Heart right ventricle (tissue), 16 donors: ENCODE measurements at regions of chr7 and their contacts with region 1.

Region 1: DNA sequence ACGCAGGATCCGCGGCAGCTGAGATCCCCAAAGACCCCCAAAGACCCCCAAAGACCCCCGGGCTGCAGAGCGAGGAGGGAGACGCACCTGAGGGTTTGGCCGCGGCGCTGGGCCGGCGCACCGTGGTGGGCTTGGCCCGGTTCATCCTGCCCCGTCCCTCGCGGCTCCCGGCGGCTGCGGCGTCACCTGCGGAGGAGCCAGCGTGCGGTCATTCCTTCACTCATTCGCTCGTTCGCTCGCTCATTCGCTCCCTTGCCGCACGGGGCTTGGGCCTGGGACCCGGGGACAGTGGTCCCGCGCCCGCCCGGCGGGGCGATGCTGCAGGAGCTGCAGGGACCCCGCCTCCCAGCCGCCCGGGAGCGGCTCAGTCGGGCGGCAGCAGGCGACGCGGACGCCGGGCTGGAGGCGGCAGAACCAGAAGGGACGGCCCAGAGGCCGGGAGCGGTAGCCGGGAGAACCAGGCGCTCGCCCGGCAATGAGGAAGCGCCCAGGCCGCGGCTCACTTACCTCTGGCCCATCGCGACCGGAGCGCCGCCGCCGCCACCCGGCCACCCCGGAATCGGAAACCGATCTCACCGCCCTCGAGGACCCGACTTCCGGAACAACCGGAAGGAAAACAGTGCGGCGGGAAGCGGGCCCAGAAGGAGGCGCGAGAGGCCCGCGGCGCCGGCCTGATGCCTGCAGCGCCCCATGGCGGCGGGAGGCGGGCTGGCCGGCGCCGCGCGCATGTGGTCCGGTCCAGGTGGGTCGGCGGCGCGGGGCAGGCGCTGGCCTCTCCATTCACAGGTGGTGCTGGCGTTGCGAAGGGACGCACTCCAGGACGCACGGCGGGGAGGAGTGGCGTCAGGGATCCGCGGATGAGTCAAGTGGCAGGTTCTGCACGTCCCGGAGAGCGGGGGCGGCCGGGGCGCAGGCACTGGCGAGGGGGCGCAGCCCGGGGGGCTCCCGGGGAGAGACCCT is at the start of gene INTS1:
- DNase-seq: peak; percentile 92 to 94
- ATAC-seq: peak; percentile 82 to 94 (median 90)
- H3K4me3 ChIP-seq: peak within 1 kb of the TSS; percentile 82 to 100 (median 94)
- H3K27ac ChIP-seq: peak within 1 kb of the TSS in 9 of 10 donors; percentile 59 to 89 (median 76)
- H3K4me1 ChIP-seq: peaks cover 12 to 36% (median 29%) of the 10 kb centered on the region in 9 donors
- H3K27me3 ChIP-seq: no peaks in the 10 kb centered on the region
- CTCF ChIP-seq: peak; percentile 75 to 98 (median 94)
- total RNA-seq, gene INTS1: 41.5 to 59.4 (median 45.4) TPM

Region 2: GRCh38 chr7:1537535-1538412 is 33.7 kb after region 1 on chr7:
- intact Hi-C with region 1: loop called in 2 of 10 experiments (anchors 2 to 5 kb)
- DNase-seq: peak; percentile 94 to 97
- ATAC-seq: peak; percentile 29 to 65 (median 50)
- H3K4me3 ChIP-seq: peak overlapping the region; percentile 26 to 69 (median 55)
- H3K27ac ChIP-seq: peak overlapping the region; percentile 92 to 100 (median 99)
- H3K4me1 ChIP-seq: peaks cover 26 to 80% (median 57%) of the 10 kb centered on the region in 9 donors
- H3K27me3 ChIP-seq: no peaks in the 10 kb centered on the region
- CTCF ChIP-seq: no peak

Region 3: DNA sequence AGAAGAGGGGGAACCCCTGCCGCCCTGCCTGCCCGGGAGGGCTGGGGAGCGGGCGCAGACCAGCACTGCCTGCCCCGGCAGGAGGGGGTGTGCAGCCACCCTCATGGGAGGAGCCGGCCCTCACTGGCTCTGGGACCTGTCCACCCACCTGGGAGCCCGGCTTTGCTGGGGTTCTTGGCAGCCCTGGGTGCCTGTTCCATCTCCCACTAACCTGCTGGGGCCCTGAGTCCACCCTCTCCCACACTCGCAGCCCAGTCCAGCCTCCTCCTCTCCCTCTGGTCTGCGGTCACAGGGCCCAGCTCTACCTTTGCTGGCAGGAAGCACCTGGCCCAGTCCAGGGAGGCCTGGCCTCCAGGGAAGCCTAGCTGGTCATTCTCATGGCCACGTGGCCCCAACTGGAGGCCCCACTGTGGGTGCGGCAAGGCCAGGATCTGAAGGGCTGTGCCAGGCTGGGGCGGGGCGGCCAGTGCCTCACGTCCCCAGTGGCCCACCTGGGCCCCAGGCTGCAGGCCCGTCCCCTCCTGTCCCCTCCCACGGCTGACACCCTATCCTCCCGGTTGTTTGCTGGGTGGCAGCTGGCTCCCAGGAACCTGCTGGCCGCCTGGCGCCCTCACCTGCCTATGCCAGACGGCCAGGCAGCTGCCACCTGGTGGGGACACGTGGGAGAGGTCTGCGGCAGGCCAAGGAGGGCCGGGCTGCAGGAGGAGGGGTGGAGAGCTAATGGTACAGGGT is 51.9 kb after region 1 on chr7 and contains the start of gene TMEM184A:
- intact Hi-C with region 1: loop called in 9 of 10 experiments (anchors 5 to 10 kb)
- DNase-seq: peak in 1 of 2 donors; percentile 47
- ATAC-seq: peak in 7 of 8 donors; percentile 14 to 61 (median 36)
- H3K4me3 ChIP-seq: no peak within 1 kb of the TSS
- H3K27ac ChIP-seq: no peak within 1 kb of the TSS
- H3K4me1 ChIP-seq: peaks cover 8 to 26% (median 19%) of the 10 kb centered on the region in 9 donors
- H3K27me3 ChIP-seq: no peaks in the 10 kb centered on the region
- CTCF ChIP-seq: peak in 7 of 9 donors; percentile 42 to 59 (median 49)
- total RNA-seq, gene TMEM184A: 0.09 to 0.85 (median 0.51) TPM